Transverse colon (tissue), 4 donors: ENCODE measurements at regions of chr15 and their contacts with region 1.

Region 1: DNA sequence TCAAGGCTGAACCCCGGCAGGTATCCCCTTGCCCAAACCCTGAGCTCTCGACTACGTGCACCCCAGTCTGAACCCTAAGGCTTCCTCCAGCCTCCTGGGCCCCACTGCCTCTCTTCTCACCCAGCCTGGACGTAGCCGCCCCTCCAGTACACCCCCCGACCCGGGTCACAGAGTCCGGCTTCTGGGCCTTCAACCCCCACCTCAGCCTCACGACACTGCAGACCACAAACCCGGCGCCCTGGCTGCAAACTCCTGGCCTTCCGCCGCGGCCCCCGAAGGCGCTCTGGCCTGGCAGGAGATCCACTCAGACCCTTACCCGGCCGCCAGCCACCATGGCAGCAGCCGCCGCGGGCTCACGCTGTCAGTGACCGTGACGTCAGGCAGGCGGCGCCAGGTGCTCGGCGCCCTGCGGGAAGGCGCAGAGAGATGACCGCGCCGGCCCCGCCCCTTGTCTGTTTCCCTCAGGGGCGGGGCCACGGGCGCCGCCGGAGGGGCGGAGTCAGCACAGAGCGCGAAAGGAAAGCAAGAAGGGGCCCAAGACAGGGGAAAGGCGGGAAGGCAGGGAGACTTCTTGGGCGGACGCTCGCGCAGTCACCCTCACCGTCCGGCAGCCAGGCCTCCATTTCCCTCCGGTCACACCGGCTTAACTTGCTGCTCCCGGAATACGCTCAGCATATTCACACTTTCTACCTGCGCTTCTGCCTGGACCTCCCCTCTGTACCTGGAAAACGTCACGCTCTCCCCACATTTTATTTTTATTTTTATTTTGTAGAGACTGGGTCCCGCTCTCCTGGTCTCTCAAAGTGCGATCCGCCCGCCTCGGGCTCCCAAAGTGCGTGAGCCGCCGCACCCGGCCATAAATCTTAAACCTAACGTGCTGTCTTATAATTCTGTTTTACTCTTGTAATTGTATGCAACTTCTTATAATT is at the start of gene RMDN3:
- DNase-seq: peak; percentile 95
- H3K4me3 ChIP-seq: peak within 1 kb of the TSS; percentile 68 to 85 (median 74)
- H3K27ac ChIP-seq: peak within 1 kb of the TSS; percentile 84 to 90 (median 86)
- H3K4me1 ChIP-seq: peaks cover 0 to 24% (median 11%) of the 10 kb centered on the region in 4 donors
- H3K27me3 ChIP-seq: no peaks in the 10 kb centered on the region
- CTCF ChIP-seq: peak in 2 of 5 experiments; percentile 12 to 17
- EP300 ChIP-seq: no peak
- POLR2A ChIP-seq: peak; percentile 68
- total RNA-seq, gene RMDN3: 16.5 to 131 (median 32.7) TPM

Region 2: DNA sequence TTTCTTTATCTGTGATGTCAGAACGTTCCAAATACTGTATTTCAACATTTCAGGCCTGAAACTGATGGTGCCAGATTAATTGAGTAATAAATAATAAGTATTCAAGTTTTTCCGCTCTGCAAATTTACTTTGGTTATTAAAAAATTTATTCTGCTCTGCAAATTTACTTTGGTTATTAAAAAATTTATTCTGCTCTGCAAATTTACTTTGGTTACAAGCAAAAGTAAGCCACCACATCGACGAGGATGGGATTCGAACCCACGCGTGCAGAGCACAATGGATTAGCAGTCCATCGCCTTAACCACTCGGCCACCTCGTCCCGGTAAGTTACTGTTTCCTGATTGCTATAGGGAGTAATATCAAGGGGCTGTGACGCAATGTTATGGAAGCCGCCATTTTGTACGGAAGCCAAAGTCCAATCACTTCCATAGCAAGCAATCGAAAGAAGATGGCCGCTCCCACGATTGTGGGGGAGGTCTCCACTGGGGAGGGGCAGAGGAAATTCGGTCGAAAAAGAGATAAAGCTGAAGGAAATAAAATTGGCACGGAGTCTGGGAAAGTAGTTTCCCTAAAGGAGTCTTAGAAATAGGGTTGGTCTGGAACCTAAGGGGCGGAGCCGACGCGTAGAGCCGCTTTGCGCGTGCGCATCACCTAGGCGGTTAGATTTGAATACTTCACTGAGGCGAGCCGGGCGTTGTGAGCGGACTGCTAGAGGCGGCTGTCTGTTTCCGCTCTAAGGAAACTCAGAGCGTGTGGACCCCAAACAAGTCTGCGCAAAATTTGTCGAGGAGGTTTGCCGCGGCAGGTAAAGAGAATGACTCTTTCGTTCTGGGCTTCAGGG is 161.3 kb before region 1 on chr15 and contains the start of gene KNL1:
- in situ Hi-C with region 1: loop called in 1 of 4 experiments (anchors 25 kb)
- intact Hi-C with region 1: no loop called
- DNase-seq: peak; percentile 94
- H3K4me3 ChIP-seq: peak within 1 kb of the TSS; percentile 34 to 61 (median 57)
- H3K27ac ChIP-seq: peak within 1 kb of the TSS; percentile 84 to 89 (median 88)
- H3K4me1 ChIP-seq: peaks cover 0 to 27% (median 7%) of the 10 kb centered on the region in 4 donors
- H3K27me3 ChIP-seq: no peaks in the 10 kb centered on the region
- CTCF ChIP-seq: no peak
- EP300 ChIP-seq: no peak
- POLR2A ChIP-seq: no peak
- total RNA-seq, gene KNL1: 3.4 to 7.6 (median 3.9) TPM

Region 3: GRCh38 chr15:40807028-40807887 is 52.1 kb after region 1 on chr15 and contains the starts of genes DNAJC17 and ZFYVE19:
- in situ Hi-C with region 1: no loop called
- intact Hi-C with region 1: loop called (anchors 2 kb)
- DNase-seq: peak; percentile 97
- H3K4me3 ChIP-seq: peak within 1 kb of the TSS; percentile 63 to 95 (median 92)
- H3K27ac ChIP-seq: peak within 1 kb of the TSS; percentile 96 to 99 (median 98)
- H3K4me1 ChIP-seq: peaks cover 5 to 42% (median 21%) of the 10 kb centered on the region in 4 donors
- H3K27me3 ChIP-seq: no peaks in the 10 kb centered on the region
- CTCF ChIP-seq: peak in 4 of 5 experiments; percentile 4 to 50 (median 27)
- EP300 ChIP-seq: no peak
- POLR2A ChIP-seq: peak; percentile 69
- total RNA-seq, gene DNAJC17: 6.0 to 56.9 (median 22.3) TPM
- total RNA-seq, gene ZFYVE19: 61.2 to 91.6 (median 69.9) TPM

Region 4: GRCh38 chr15:41161336-41161735 is 406.2 kb after region 1 on chr15:
- in situ Hi-C with region 1: no loop called
- intact Hi-C with region 1: no loop called
- DNase-seq: no peak
- H3K4me3 ChIP-seq: no peak overlapping the region
- H3K27ac ChIP-seq: no peak overlapping the region
- H3K4me1 ChIP-seq: no peaks in the 10 kb centered on the region
- H3K27me3 ChIP-seq: no peaks in the 10 kb centered on the region
- CTCF ChIP-seq: no peak
- EP300 ChIP-seq: no peak
- POLR2A ChIP-seq: no peak